ENCODE measurements at regions of chr22 and their contacts with region 1.

Region 1: DNA sequence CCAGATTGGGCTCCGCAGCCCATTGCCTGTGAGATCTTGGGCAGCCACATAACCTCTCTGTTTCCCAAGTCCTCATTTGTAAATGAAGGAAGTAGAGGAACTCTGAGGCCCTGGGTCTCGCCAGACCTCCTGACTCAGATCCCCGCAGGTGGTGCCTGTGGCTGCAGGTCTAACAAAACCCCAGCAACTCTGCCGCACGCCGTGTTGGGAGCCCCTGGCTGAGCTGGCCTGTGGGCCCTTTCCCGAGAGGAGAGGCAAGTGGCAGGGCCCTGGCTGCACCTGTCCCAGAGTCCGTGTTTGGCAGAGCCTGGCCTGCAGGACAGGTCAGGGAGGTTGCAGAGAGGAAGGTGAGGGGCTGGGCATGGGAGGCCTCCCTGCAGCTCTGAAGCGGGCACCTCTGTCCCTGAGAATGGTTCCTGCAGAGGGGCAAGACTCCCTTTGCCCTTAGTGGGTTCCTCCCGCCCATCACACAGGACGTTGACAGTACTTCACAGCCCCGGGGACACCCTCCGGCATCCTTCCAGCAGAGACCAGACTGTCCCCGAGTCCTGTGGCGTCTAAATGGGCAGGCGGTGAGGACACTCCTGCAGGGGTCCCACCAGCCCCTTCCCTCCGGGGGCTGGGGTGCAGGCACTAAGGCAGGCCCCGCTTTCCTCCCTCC is 67.7 kb downstream of the ARHGAP8 start:
- DNase-seq: no peak
- H3K4me3 Mint-ChIP-seq: no peak overlapping the region
- H3K27ac Mint-ChIP-seq: no peak overlapping the region
- H3K4me1 Mint-ChIP-seq: no peaks in the 10 kb centered on the region
- H3K27me3 Mint-ChIP-seq: no peaks in the 10 kb centered on the region
- CTCF ChIP-seq: no peak

Region 2: GRCh38 chr22:44380756-44381470 is 439.2 kb before region 1 on chr22:
- CTCF ChIA-PET with region 1: no interaction called
- POLR2A ChIA-PET with region 1: no interaction called
- intact Hi-C with region 1: no loop called
- DNase-seq: no peak
- H3K4me3 Mint-ChIP-seq: no peak overlapping the region
- H3K27ac Mint-ChIP-seq: no peak overlapping the region
- H3K4me1 Mint-ChIP-seq: no peaks in the 10 kb centered on the region
- H3K27me3 Mint-ChIP-seq: peaks cover 18% of the 10 kb centered on the region
- CTCF ChIP-seq: no peak

Region 3: GRCh38 chr22:44538051-44538450 is 282.1 kb before region 1 on chr22:
- CTCF ChIA-PET with region 1: no interaction called
- POLR2A ChIA-PET with region 1: no interaction called
- intact Hi-C with region 1: no loop called
- DNase-seq: peak; percentile 51
- H3K4me3 Mint-ChIP-seq: no peak overlapping the region
- H3K27ac Mint-ChIP-seq: no peak overlapping the region
- H3K4me1 Mint-ChIP-seq: no peaks in the 10 kb centered on the region
- H3K27me3 Mint-ChIP-seq: peaks cover 64% of the 10 kb centered on the region
- CTCF ChIP-seq: no peak

Region 4: GRCh38 chr22:44871782-44872181 is 51.7 kb after region 1 on chr22:
- CTCF ChIA-PET with region 1: interaction called, 11 read pairs
- POLR2A ChIA-PET with region 1: interaction called, 3 read pairs
- intact Hi-C with region 1: no loop called
- DNase-seq: no peak
- H3K4me3 Mint-ChIP-seq: no peak overlapping the region
- H3K27ac Mint-ChIP-seq: no peak overlapping the region
- H3K4me1 Mint-ChIP-seq: peaks cover 13% of the 10 kb centered on the region
- H3K27me3 Mint-ChIP-seq: no peaks in the 10 kb centered on the region
- CTCF ChIP-seq: no peak

Region 5: DNA sequence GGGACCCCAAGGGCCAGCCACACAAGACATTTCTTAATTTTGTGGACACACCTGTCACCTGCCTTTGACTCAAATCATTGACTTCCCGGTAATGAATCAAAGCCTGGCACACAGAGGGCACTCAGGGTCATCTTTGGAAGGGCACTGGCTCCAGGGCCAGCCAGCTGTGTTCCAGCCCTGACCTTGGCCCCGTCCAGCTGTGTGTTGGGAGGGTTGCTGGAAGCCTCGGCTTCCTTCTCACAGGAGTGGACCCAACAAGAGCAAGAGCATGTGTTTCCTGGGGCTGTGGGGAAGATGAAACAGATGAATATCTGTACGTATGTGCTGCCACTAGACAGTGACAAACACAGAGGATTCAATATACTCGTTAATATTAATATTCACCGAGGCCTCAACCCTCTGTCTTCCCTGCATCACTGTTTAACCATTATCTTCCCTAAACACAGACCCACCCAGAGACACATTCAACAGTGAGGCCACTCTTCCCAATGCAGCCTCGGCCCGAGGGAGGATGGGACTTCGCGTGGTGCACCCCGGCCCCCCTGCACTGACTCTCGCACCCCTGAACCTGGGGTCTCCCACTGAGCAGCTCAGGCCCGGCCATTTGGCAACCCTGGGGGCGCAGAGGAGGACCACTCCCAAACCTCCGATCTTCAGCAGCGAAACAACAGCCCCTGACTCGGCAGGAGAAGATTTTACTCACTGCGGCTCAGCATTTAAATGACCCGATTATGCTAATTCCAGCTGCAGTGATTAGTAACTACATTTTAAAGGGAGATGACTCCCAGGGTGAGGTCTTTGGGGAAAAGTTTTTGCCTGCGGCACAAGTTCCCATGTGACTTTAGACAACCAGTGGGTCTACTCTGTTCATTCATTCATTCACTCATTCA is 144.0 kb after region 1 on chr22:
- CTCF ChIA-PET with region 1: interaction called, 3 read pairs
- POLR2A ChIA-PET with region 1: no interaction called
- intact Hi-C with region 1: loop called (anchors 5 kb)
- DNase-seq: no peak
- H3K4me3 Mint-ChIP-seq: no peak overlapping the region
- H3K27ac Mint-ChIP-seq: no peak overlapping the region
- H3K4me1 Mint-ChIP-seq: no peaks in the 10 kb centered on the region
- H3K27me3 Mint-ChIP-seq: no peaks in the 10 kb centered on the region
- CTCF ChIP-seq: no peak

Region 6: DNA sequence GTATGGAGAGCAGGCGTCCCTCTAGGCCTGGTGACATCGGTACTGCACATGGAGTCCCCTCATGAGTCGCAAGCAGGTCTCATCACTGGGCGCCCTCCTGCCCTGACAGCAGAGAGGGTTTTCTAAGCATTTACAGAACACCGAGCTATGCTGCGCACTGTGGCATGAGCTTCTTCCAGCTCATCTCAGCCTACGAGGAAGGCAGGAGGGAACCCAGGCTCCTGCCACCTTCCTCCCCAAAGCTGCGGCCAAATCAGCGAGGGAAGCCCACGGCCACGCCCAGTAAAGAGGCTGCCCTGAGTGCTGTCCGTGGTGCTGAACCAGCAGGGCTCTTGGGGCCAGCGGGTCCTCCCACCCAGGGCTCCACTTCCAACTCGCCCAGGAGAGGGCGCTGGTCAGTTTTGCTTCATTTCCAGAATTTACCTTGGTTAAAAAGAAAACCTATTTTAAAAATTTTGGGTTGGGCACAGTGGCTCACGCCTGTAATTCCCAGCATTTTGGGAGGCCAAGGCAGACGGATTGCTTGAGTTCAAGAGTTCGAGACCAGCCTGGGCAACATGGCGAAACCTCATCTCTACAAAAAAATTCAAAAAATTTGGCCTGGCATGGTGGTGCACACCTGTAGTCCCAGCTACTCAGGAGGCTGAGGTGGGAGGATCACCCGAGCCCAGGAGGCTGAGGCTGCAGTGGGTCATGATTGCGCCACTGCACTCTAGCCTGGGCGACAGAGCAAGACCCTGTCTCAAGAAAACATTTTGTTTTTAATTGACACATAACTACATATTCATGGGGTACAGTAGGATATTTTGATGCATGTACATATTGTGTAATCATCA is 155.5 kb after region 1 on chr22:
- CTCF ChIA-PET with region 1: interaction called, 3 read pairs
- POLR2A ChIA-PET with region 1: no interaction called
- intact Hi-C with region 1: loop called (anchors 1 kb)
- DNase-seq: peak; percentile 91
- H3K4me3 Mint-ChIP-seq: no peak overlapping the region
- H3K27ac Mint-ChIP-seq: no peak overlapping the region
- H3K4me1 Mint-ChIP-seq: no peaks in the 10 kb centered on the region
- H3K27me3 Mint-ChIP-seq: peaks cover 51% of the 10 kb centered on the region
- CTCF ChIP-seq: peak; percentile 89

Region 7: DNA sequence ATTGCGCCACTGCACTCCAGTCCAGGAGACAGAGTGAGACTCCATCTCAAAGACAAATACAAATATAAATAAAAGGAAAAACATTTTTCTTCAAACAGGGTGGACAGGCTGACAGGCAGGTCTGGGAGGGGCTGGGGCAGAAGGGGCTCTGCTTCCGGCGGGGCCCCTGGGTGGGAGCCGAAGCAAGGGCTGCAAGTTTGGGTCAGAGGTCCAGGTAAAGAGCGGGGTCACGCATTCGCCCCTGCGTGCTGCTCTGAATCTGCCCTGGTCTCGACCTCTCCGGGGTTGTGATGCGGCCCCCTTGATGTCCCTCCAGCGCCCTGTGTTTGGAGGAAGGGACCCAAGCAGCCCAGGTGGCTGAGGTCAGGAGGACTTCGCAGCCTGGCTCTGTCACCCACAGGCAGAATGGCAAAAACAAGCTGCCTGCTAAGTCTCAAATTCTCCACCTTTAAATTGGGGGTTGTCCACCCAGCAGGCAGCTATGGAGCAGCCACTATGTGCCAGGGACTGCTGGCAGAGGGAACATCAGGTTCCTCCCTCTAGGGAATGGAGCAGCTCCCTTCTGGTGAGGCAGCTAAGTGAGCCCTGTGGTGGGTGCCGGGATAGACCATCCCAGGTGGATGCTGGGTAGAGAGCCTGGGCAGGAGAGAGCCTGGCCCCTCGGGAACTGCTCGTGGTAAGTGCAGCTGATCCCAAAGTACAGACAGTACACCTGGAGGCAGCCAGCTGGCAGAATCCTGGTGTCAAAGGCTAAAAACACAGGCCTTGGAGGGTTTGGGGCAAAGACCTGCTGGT is 200.0 kb after region 1 on chr22:
- CTCF ChIA-PET with region 1: no interaction called
- POLR2A ChIA-PET with region 1: no interaction called
- intact Hi-C with region 1: no loop called
- DNase-seq: no peak
- H3K4me3 Mint-ChIP-seq: no peak overlapping the region
- H3K27ac Mint-ChIP-seq: no peak overlapping the region
- H3K4me1 Mint-ChIP-seq: no peaks in the 10 kb centered on the region
- H3K27me3 Mint-ChIP-seq: peaks cover 74% of the 10 kb centered on the region
- CTCF ChIP-seq: no peak

Region 8: GRCh38 chr22:45082795-45083194 is 262.7 kb after region 1 on chr22:
- CTCF ChIA-PET with region 1: interaction called, 14 read pairs
- POLR2A ChIA-PET with region 1: no interaction called
- intact Hi-C with region 1: loop called (anchors 5 kb)
- DNase-seq: peak; percentile 16
- H3K4me3 Mint-ChIP-seq: no peak overlapping the region
- H3K27ac Mint-ChIP-seq: no peak overlapping the region
- H3K4me1 Mint-ChIP-seq: no peaks in the 10 kb centered on the region
- H3K27me3 Mint-ChIP-seq: peaks cover 42% of the 10 kb centered on the region
- CTCF ChIP-seq: peak; percentile 40

Region 9: DNA sequence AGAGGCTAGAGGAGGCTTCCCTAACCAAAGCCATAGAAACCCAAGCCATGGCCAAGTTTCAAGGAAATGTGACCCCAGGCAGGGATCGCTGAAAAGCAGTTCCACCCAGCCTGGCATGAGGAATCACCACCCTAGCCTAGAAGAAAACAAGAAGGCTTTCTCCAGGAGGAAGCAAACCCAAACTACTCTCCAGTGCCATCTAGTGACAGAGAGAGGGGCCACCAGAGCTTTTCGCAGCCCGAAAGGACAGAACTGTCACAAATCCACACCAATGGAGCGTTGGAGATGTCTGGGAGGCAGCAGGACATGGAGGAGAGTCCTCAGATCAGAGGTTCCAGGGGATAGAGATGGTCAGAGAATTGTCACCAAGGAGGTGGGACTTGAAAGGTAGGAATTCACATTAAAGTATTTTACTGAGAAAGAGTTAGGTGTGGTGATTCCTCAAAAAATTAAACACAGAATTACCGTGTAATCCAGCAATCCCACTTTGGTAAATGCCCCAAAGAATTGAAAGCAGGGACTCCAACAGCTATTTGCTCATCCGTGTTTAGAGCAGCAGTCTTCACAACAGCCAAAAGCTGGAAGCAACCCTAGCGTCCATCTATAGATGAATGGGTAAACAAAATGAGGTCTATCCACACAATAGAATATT is 276.3 kb after region 1 on chr22:
- CTCF ChIA-PET with region 1: interaction called, 40 read pairs
- POLR2A ChIA-PET with region 1: interaction called, 5 read pairs
- intact Hi-C with region 1: loop called (anchors 1 kb)
- DNase-seq: peak; percentile 74
- H3K4me3 Mint-ChIP-seq: no peak overlapping the region
- H3K27ac Mint-ChIP-seq: no peak overlapping the region
- H3K4me1 Mint-ChIP-seq: peaks cover 11% of the 10 kb centered on the region
- H3K27me3 Mint-ChIP-seq: peaks cover 38% of the 10 kb centered on the region
- CTCF ChIP-seq: peak; percentile 80

Region 10: DNA sequence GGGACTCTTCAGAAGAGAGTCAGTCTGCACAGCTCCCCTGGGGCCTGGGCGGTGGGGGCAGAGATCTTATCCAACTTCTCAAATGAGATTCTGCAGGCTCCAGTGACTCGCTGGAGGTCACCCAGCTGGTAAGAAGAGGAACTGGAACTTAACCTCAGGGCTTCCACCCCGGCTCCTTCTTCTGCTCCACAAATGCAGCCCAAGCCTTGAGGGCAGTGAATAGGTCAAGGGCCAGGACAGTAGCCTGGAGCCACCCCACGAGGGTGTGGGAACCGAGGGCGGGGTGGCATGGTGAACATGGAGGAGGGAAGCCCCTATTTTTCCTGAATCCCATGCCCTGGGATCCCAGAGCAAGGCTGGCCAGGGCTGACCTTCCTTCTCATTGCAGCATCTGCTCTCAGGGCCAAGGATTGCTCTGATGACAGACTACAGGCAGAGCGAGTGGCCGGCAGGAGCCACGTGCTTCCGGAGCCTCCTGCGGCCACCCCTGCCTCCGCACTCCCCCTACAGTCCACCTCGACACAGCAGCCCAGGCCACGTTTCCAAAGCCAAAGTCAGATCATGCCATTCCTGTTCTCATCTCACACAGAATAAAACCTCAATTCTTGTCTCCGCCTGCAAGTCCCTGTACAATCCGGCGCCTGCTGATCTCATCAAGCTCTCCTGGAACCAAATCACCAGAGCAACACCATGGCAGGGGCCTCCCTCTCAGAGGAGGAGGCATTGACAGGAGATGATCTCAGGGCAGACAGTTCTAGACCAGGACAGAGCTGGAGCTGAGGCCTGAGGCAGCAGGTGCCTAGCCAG is 443.6 kb after region 1 on chr22:
- CTCF ChIA-PET with region 1: no interaction called
- POLR2A ChIA-PET with region 1: no interaction called
- intact Hi-C with region 1: loop called (anchors 5 kb)
- DNase-seq: peak; percentile 75
- H3K4me3 Mint-ChIP-seq: no peak overlapping the region
- H3K27ac Mint-ChIP-seq: no peak overlapping the region
- H3K4me1 Mint-ChIP-seq: peaks cover 8% of the 10 kb centered on the region
- H3K27me3 Mint-ChIP-seq: no peaks in the 10 kb centered on the region
- CTCF ChIP-seq: peak; percentile 63

Measured in MCF 10A (cell line).